CD8-positive, alpha-beta T cell (primary cell): ENCODE measurements at regions of chr2 and their contacts with region 1.

Region 1: GRCh38 chr2:174522553-174522952 is 35.7 kb upstream of the GPR155 start:
- DNase-seq: peak in 2 of 9 experiments; percentile 32 to 44
- ATAC-seq: no peak
- H3K4me3 ChIP-seq: no peak overlapping the region
- H3K4me3 Mint-ChIP-seq: no peak overlapping the region
- H3K27ac ChIP-seq: no peak overlapping the region
- H3K27ac Mint-ChIP-seq: no peak overlapping the region
- H3K4me1 ChIP-seq: no peaks in the 10 kb centered on the region
- H3K4me1 Mint-ChIP-seq: peaks cover 18% of the 10 kb centered on the region
- H3K27me3 ChIP-seq: no peaks in the 10 kb centered on the region
- H3K27me3 Mint-ChIP-seq: no peaks in the 10 kb centered on the region
- CTCF ChIP-seq: no peak

Region 2: GRCh38 chr2:174487108-174487819 is 35.3 kb before region 1 on chr2:
- CTCF ChIA-PET with region 1: interaction called, 28 read pairs
- POLR2A ChIA-PET with region 1: interaction called, 6 read pairs
- intact Hi-C with region 1: loop called in 1 of 2 experiments (anchors 1 kb)
- DNase-seq: peak; percentile 77 to 98 (median 97)
- ATAC-seq: peak; percentile 74
- H3K4me3 ChIP-seq: peak overlapping the region; percentile 83 to 86
- H3K4me3 Mint-ChIP-seq: peak overlapping the region; percentile 97
- H3K27ac ChIP-seq: peak overlapping the region; percentile 69 to 85
- H3K27ac Mint-ChIP-seq: peak overlapping the region; percentile 88
- H3K4me1 ChIP-seq: peaks cover 59% of the 10 kb centered on the region
- H3K4me1 Mint-ChIP-seq: peaks cover 73% of the 10 kb centered on the region
- H3K27me3 ChIP-seq: no peaks in the 10 kb centered on the region
- H3K27me3 Mint-ChIP-seq: no peaks in the 10 kb centered on the region
- CTCF ChIP-seq: no peak

Region 3: DNA sequence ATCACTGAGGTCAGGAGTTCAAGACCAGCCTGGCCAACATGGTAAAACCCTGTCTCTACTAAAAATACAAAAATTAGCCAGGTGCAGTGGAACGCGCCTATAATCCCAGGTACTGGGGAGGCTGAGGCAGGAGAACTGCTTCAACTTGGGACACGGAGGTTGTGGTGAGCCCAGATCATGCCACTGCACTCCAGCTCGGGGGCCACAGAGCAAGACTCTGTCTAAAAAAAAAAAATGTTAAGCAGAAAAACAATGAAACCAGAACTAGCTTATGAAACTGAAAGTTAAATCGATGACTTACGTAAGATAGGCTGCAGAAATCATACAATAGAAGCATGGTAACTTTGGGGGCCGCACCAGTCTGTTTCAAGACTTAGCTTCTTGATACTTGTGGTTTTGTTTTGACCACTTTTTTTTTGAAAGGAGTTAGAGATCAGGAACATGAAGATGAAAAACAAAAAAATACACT is 29.6 kb before region 1 on chr2:
- CTCF ChIA-PET with region 1: interaction called, 28 read pairs
- POLR2A ChIA-PET with region 1: interaction called, 3 read pairs
- intact Hi-C with region 1: no loop called
- DNase-seq: peak; percentile 34 to 94 (median 64)
- ATAC-seq: peak; percentile 85
- H3K4me3 ChIP-seq: peak overlapping the region; percentile 27 to 47
- H3K4me3 Mint-ChIP-seq: peak overlapping the region; percentile 85
- H3K27ac ChIP-seq: peak overlapping the region; percentile 71 to 88
- H3K27ac Mint-ChIP-seq: peak overlapping the region; percentile 97
- H3K4me1 ChIP-seq: peaks cover 71% of the 10 kb centered on the region
- H3K4me1 Mint-ChIP-seq: peaks cover 83% of the 10 kb centered on the region
- H3K27me3 ChIP-seq: no peaks in the 10 kb centered on the region
- H3K27me3 Mint-ChIP-seq: no peaks in the 10 kb centered on the region
- CTCF ChIP-seq: no peak

Region 4: GRCh38 chr2:174546581-174547506 is 24.3 kb after region 1 on chr2:
- CTCF ChIA-PET with region 1: interaction called, 14 read pairs
- POLR2A ChIA-PET with region 1: interaction called, 4 read pairs
- intact Hi-C with region 1: no loop called
- DNase-seq: peak in 5 of 9 experiments; percentile 8 to 66 (median 46)
- ATAC-seq: peak; percentile 83
- H3K4me3 ChIP-seq: no peak overlapping the region
- H3K4me3 Mint-ChIP-seq: no peak overlapping the region
- H3K27ac ChIP-seq: no peak overlapping the region
- H3K27ac Mint-ChIP-seq: peak overlapping the region; percentile 73
- H3K4me1 ChIP-seq: peaks cover 4% of the 10 kb centered on the region
- H3K4me1 Mint-ChIP-seq: peaks cover 23% of the 10 kb centered on the region
- H3K27me3 ChIP-seq: no peaks in the 10 kb centered on the region
- H3K27me3 Mint-ChIP-seq: no peaks in the 10 kb centered on the region
- CTCF ChIP-seq: no peak

Region 5: DNA sequence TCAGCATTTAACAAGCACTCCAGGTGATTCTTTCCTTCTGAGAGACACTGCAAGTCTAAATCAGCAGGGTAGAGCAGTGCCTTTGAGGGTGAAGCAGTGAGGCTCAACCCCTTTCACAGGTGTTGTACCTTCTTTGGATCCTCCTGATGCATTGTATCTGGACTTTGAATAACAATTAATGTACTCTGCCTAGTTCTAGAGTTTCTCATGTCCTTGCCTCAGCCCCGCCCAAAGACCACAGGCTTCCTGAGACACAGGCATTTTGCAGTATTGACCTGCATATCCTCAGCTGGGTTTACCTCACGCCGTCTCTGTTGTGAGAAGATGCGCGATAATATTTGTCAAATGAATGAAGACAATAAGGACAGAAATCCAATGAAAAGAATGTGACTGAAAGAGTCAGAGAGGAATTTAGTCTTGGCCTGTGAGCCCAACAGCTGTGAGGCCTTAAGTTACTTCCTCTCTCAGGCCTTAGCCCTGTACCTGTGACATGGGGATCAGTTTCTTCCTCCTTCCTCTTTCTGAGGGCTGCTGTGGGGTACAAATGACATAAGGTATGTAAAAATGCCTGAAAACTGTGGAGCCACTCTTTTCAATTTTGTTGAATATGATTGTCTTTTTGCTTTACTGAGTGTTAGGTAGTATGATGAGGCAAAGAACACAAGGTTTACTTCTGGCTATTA is 31.4 kb after region 1 on chr2:
- CTCF ChIA-PET with region 1: interaction called, 5 read pairs
- POLR2A ChIA-PET with region 1: no interaction called
- intact Hi-C with region 1: loop called in 1 of 2 experiments (anchors 1 kb)
- DNase-seq: peak in 6 of 9 experiments; percentile 15 to 63 (median 32)
- ATAC-seq: peak; percentile 47
- H3K4me3 ChIP-seq: peak overlapping the region in 1 of 2 experiments; percentile 4
- H3K4me3 Mint-ChIP-seq: peak overlapping the region; percentile 40
- H3K27ac ChIP-seq: peak overlapping the region; percentile 0 to 63
- H3K27ac Mint-ChIP-seq: peak overlapping the region; percentile 88
- H3K4me1 ChIP-seq: peaks cover 35% of the 10 kb centered on the region
- H3K4me1 Mint-ChIP-seq: peaks cover 47% of the 10 kb centered on the region
- H3K27me3 ChIP-seq: no peaks in the 10 kb centered on the region
- H3K27me3 Mint-ChIP-seq: no peaks in the 10 kb centered on the region
- CTCF ChIP-seq: no peak

Region 6: GRCh38 chr2:174590928-174591648 is 68.5 kb after region 1 on chr2:
- CTCF ChIA-PET with region 1: no interaction called
- POLR2A ChIA-PET with region 1: no interaction called
- intact Hi-C with region 1: no loop called
- DNase-seq: peak in 2 of 9 experiments; percentile 36 to 56
- ATAC-seq: no peak
- H3K4me3 ChIP-seq: peak overlapping the region; percentile 24 to 30
- H3K4me3 Mint-ChIP-seq: peak overlapping the region; percentile 74
- H3K27ac ChIP-seq: peak overlapping the region; percentile 46 to 91
- H3K27ac Mint-ChIP-seq: peak overlapping the region; percentile 98
- H3K4me1 ChIP-seq: peaks cover 62% of the 10 kb centered on the region
- H3K4me1 Mint-ChIP-seq: peaks cover 77% of the 10 kb centered on the region
- H3K27me3 ChIP-seq: no peaks in the 10 kb centered on the region
- H3K27me3 Mint-ChIP-seq: no peaks in the 10 kb centered on the region
- CTCF ChIP-seq: no peak